Body of pancreas (tissue), 4 donors: ENCODE measurements at regions of chr5 and their contacts with region 1.

Region 1: GRCh38 chr5:14351845-14352712 is 208.9 kb downstream of the TRIO start:
- DNase-seq: peak; percentile 67 to 74 (median 72)
- ATAC-seq: peak; percentile 97
- H3K4me3 ChIP-seq: no peak overlapping the region
- H3K27ac ChIP-seq: no peak overlapping the region
- H3K4me1 ChIP-seq: no peaks in the 10 kb centered on the region
- H3K27me3 ChIP-seq: no peaks in the 10 kb centered on the region
- CTCF ChIP-seq: peak; percentile 81 to 96 (median 85)
- POLR2A ChIP-seq: no peak

Region 2: GRCh38 chr5:14644623-14645237 is 292.7 kb after region 1 on chr5:
- intact Hi-C with region 1: loop called (anchors 10 kb)
- DNase-seq: no peak
- ATAC-seq: no peak
- H3K4me3 ChIP-seq: no peak overlapping the region
- H3K27ac ChIP-seq: no peak overlapping the region
- H3K4me1 ChIP-seq: peaks cover 4% of the 10 kb centered on the region
- H3K27me3 ChIP-seq: no peaks in the 10 kb centered on the region
- CTCF ChIP-seq: no peak
- POLR2A ChIP-seq: no peak